ENCODE measurements at regions of chr13 and their contacts with region 1.

Region 1: GRCh38 chr13:79541426-79542049 is 60.6 kb downstream of the NDFIP2 start:
- DNase-seq: no peak

Region 2: DNA sequence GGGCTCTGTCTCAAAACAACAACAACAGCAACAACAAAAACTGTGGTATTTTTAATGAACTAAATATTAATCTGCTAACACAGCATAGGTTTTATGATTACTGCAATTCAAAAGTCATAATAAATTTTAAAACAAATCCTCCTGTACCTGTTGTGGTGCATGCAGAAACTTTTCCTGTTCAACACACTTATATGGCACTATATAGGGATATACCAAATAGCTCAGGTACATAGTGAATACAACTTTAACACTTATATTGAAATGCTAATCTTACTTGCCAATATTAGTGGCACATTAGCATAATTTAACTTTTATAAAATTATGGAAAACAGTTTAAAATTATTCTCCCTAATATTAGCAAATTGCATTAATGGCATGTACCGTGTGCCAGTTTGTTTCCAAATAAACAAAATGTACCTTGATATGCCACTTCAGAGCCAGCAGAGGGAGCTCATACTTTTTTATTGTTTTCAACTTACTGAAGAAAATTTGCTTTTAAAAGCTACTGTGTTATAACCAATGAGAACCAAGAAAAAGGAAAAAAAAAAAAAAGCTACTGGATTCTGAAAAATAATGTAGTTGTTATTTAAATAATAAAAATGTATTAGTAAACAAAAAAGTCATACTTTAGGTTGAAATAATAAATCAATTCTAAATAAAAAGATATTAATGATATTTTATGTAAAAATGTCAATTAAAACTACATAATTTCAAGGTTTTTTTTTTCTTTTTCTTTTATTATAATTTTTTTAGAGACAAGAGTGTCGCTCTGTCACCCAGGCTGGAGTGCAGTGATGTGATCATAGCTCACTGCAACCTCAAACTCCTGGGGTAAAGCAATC is 117.5 kb before region 1 on chr13:
- intact Hi-C with region 1: loop called (anchors 1 kb)
- DNase-seq: no peak

Region 3: GRCh38 chr13:79658333-79658975 is 116.9 kb after region 1 on chr13:
- intact Hi-C with region 1: no loop called
- DNase-seq: no peak

Measured in posterior cingulate gyrus (tissue), 11 donors.